Spleen (tissue), 13 donors: ENCODE measurements at regions of chr4 and their contacts with region 1.

Region 1: GRCh38 chr4:76179398-76180318 is 31.5 kb upstream of the NUP54 start:
- DNase-seq: peak; percentile 94
- H3K4me3 ChIP-seq: no peak overlapping the region
- H3K27ac ChIP-seq: no peak overlapping the region
- H3K4me1 ChIP-seq: peaks cover 0 to 22% (median 6%) of the 10 kb centered on the region in 6 donors
- H3K27me3 ChIP-seq: no peaks in the 10 kb centered on the region
- CTCF ChIP-seq: peak; percentile 52 to 90 (median 82)
- POLR2A ChIP-seq: no peak

Region 2: GRCh38 chr4:76377911-76378310 is 198.3 kb after region 1 on chr4:
- intact Hi-C with region 1: loop called (anchors 10 kb)
- DNase-seq: no peak
- H3K4me3 ChIP-seq: no peak overlapping the region
- H3K27ac ChIP-seq: no peak overlapping the region
- H3K4me1 ChIP-seq: peaks cover 0 to 4% (median 1%) of the 10 kb centered on the region in 6 donors
- H3K27me3 ChIP-seq: no peaks in the 10 kb centered on the region
- CTCF ChIP-seq: peak in 9 of 11 experiments; percentile 10 to 64 (median 38)
- POLR2A ChIP-seq: no peak

Region 3: DNA sequence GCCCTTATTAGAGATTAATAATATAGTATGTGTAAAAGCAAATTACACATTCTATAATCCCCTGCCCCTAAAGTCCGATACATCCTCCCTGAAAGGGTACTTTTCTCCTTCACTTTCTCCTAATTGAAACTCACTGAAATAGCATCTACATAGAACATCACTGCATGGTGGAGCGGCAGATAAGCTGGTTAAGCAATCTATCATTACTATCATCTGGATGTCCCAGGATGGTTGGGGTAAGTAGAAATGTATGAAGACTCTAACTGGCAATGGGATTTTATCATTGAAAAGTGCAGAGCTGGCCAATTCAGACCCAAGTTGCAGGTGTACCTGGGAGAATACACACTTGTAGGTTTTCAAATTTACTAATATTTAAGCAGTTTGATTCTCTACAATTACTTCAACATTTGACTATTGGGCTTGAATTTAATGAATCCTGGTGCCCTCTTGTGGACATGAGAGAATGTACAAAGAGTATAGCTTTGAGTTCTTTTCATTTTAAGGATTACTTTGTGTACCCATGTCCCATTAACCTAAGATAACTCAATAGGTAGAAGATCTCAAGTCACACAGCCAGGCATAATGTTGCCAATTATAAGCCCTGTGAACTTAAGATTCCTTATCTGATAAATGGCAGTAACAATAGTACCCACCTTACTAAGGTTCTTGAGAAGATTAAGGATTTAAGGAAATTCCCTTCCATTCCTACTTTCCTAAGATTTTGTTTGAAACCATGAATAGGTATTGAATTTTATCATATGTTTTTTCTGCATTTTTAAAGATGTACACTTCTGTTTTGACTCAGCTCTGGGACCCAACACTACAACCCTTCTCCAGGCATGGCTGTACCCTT is 325.2 kb after region 1 on chr4:
- intact Hi-C with region 1: loop called (anchors 5 kb)
- DNase-seq: no peak
- H3K4me3 ChIP-seq: no peak overlapping the region
- H3K27ac ChIP-seq: no peak overlapping the region
- H3K4me1 ChIP-seq: peaks cover 0 to 3% (median 0%) of the 10 kb centered on the region in 6 donors
- H3K27me3 ChIP-seq: peaks cover 0 to 8% (median 0%) of the 10 kb centered on the region in 7 donors
- CTCF ChIP-seq: peak in 10 of 11 experiments; percentile 12 to 68 (median 48)
- POLR2A ChIP-seq: no peak

Region 4: DNA sequence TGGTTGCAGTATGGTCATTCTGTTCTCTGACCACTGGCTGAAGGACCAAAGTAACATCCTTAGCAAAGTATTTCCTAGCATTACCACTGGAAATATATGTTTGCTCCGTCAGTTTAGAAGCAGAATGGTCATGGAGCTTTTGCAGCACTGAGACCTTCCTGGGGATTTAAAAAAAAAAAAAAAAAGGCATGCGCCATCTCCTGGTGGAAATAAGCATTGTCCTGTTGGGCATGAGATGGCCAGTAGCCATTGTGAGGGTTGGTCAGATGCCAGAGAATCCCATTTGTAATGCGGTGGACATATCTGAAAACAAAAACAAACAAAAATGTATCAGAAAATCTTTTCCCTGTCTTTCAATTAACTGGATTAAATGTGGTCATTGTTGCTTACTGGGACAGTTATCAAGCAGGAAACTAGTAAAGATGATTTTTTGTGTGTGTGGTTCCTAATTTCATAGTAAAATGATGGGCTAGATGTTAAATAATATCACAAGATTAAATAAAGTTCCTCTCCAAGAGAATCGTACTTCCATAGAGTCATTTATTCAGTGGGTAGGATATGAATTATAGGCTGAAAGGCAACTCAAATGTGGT is 578.7 kb after region 1 on chr4:
- intact Hi-C with region 1: loop called (anchors 10 kb)
- DNase-seq: no peak
- H3K4me3 ChIP-seq: no peak overlapping the region
- H3K27ac ChIP-seq: peak overlapping the region in 2 of 8 donors; percentile 49 to 63
- H3K4me1 ChIP-seq: peaks cover 0 to 16% (median 0%) of the 10 kb centered on the region in 6 donors
- H3K27me3 ChIP-seq: peaks cover 0 to 12% (median 0%) of the 10 kb centered on the region in 7 donors
- CTCF ChIP-seq: peak; percentile 47 to 83 (median 70)
- POLR2A ChIP-seq: no peak